ENCODE measurements at regions of chr10 and their contacts with region 1.

Region 1: GRCh38 chr10:102225646-102226541 is at the start of gene ELOVL3:
- DNase-seq: peak; percentile 94
- H3K4me3 Mint-ChIP-seq: peak within 1 kb of the TSS; percentile 47
- H3K27ac Mint-ChIP-seq: no peak within 1 kb of the TSS
- H3K4me1 Mint-ChIP-seq: peaks cover 13% of the 10 kb centered on the region
- H3K27me3 Mint-ChIP-seq: peaks cover 40% of the 10 kb centered on the region
- total RNA-seq, gene ELOVL3: 0.21 to 0.56 TPM

Region 2: DNA sequence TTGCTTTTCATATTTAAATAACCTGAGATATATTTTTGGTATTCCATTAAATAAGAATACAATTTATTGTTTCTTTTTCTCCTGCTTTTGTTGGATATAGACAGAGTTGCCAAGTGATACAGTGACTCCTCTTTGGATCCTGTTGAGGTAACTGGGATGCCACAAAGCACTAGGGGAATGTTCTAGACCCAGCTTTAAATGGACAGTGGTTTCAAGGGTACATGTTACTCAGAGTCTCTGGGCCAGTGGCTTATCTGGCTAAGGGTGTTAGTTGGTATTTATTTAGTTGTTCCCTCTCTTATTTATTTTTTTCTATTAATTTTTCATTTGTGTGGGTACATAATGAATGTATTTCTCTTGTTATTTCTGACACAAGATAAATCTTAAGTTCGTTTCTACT is 28.5 kb after region 1 on chr10:
- CTCF ChIA-PET with region 1: interaction called, 111 read pairs
- POLR2A ChIA-PET with region 1: interaction called, 3 read pairs
- intact Hi-C with region 1: no loop called
- DNase-seq: no peak
- H3K4me3 Mint-ChIP-seq: no peak overlapping the region
- H3K27ac Mint-ChIP-seq: no peak overlapping the region
- H3K4me1 Mint-ChIP-seq: peaks cover 22% of the 10 kb centered on the region
- H3K27me3 Mint-ChIP-seq: no peaks in the 10 kb centered on the region

Region 3: DNA sequence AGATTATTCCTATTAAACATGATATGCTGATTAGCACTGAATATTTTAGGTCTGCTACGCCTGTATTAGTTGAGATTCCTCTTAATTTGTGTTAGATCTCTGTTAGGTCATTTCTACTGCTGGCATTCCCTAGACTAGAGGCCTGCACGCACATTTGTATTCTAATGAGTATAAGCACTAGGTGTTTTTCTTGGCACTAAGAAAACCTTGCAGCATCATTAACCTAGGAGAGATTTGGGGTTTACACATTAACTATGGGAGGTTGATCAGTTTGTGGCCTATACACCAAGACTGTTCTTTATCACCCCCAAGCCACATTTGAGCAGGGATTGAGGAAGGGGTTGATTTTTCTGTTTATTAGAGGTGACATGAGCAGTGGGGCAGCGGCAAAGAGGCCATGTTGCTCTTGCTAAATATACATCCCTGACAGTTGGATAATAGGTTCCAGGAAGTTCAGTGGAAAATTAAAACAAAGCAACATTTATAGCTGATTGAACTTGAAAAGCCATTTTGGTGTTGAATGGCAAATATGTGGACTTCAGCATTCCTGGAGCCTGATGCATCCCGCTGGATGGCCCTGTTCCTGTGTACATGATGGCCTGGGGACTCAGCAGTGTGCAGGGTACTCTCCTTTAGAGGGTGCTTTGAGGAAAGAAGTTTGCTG is 84.6 kb after region 1 on chr10:
- CTCF ChIA-PET with region 1: interaction called, 42 read pairs
- POLR2A ChIA-PET with region 1: no interaction called
- intact Hi-C with region 1: no loop called
- DNase-seq: no peak
- H3K4me3 Mint-ChIP-seq: no peak overlapping the region
- H3K27ac Mint-ChIP-seq: no peak overlapping the region
- H3K4me1 Mint-ChIP-seq: peaks cover 56% of the 10 kb centered on the region
- H3K27me3 Mint-ChIP-seq: no peaks in the 10 kb centered on the region

Region 4: DNA sequence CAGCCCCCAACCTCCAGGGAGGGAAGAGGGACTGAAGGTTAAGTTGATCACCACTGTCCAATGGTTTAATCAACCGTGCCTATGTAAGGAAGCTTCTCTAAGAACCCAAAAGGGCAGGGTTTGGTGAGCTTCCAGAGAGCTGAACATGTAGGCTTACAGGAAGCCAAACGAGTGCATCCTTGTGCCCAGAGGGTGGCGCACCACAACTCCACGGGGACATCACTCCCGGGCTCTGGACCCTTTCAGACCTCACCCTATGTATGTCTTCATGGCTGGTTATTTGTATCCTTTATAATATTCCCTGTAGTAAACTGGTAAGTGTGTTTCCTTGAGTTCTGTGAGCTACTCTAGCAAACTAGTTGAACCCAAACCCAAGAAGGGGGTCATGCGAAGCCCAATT is 158.2 kb after region 1 on chr10:
- CTCF ChIA-PET with region 1: interaction called, 31 read pairs
- POLR2A ChIA-PET with region 1: no interaction called
- intact Hi-C with region 1: no loop called
- DNase-seq: peak; percentile 37
- H3K4me3 Mint-ChIP-seq: no peak overlapping the region
- H3K27ac Mint-ChIP-seq: no peak overlapping the region
- H3K4me1 Mint-ChIP-seq: peaks cover 4% of the 10 kb centered on the region
- H3K27me3 Mint-ChIP-seq: no peaks in the 10 kb centered on the region

Region 5: GRCh38 chr10:102420810-102421644 is 195.1 kb after region 1 on chr10 and contains the start of gene FBXL15:
- CTCF ChIA-PET with region 1: interaction called, 62 read pairs
- POLR2A ChIA-PET with region 1: interaction called, 3 read pairs
- intact Hi-C with region 1: no loop called
- DNase-seq: peak; percentile 98
- H3K4me3 Mint-ChIP-seq: peak within 1 kb of the TSS; percentile 94
- H3K27ac Mint-ChIP-seq: peak within 1 kb of the TSS; percentile 92
- H3K4me1 Mint-ChIP-seq: peaks cover 35% of the 10 kb centered on the region
- H3K27me3 Mint-ChIP-seq: peaks cover 20% of the 10 kb centered on the region
- total RNA-seq, gene FBXL15: 10.8 to 11.4 TPM

Region 6: GRCh38 chr10:102476466-102477141 is 250.7 kb after region 1 on chr10:
- CTCF ChIA-PET with region 1: interaction called, 34 read pairs
- POLR2A ChIA-PET with region 1: no interaction called
- intact Hi-C with region 1: loop called (anchors 2 kb)
- DNase-seq: no peak
- H3K4me3 Mint-ChIP-seq: no peak overlapping the region
- H3K27ac Mint-ChIP-seq: peak overlapping the region; percentile 65
- H3K4me1 Mint-ChIP-seq: peaks cover 21% of the 10 kb centered on the region
- H3K27me3 Mint-ChIP-seq: no peaks in the 10 kb centered on the region